Natural killer cell (primary cell): ENCODE measurements at regions of chr17 and their contacts with region 1.

Region 1: GRCh38 chr17:55356434-55357328 is 65.0 kb downstream of the MMD start:
- DNase-seq: peak; percentile 30 to 78
- ATAC-seq: peak; percentile 81 to 90 (median 81)
- H3K4me3 ChIP-seq: no peak overlapping the region
- H3K4me3 Mint-ChIP-seq: no peak overlapping the region
- H3K27ac ChIP-seq: no peak overlapping the region
- H3K27ac Mint-ChIP-seq: no peak overlapping the region
- H3K4me1 ChIP-seq: no peaks in the 10 kb centered on the region
- H3K4me1 Mint-ChIP-seq: peaks cover 5 to 6% of the 10 kb centered on the region in 2 donors
- H3K27me3 ChIP-seq: peaks cover 5% of the 10 kb centered on the region
- H3K27me3 Mint-ChIP-seq: peaks cover 14 to 22% of the 10 kb centered on the region in 2 donors
- CTCF ChIP-seq: peak; percentile 84

Region 2: DNA sequence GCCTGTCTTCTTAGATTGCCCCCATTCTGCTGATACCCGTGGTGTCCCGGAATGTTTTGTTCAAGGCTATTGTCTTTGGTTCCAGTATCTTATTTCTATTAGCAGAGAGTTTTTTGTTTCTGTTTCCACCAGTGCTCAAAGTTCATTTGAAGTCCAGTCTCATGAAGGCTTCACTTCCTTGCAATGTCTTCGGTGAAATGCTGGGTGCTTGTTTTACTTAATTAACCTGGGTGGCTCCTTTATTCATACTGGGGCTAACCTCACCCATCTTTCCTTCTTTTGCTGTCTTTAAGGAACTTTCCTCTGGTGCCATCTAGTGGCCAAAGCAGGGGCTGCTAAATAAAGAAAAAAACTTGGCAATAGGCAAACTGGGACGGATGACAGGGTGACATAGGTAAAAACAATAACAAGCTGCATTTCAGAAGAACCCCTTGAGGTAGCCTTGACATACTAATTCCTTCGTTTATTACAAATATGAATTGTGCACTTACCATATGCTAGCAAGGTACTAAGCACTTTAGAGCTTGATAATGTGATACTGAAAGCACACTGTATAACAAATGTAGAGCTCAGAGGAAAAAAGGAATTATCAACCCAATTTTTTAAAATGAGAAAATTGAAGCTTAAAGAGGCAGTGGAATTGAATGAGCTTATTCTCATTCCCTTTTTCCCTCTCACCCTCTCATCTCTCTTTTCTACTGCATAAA is 157.4 kb after region 1 on chr17:
- intact Hi-C with region 1: loop called (anchors 2 kb)
- DNase-seq: peak; percentile 39 to 82
- ATAC-seq: peak; percentile 59 to 76 (median 73)
- H3K4me3 ChIP-seq: no peak overlapping the region
- H3K4me3 Mint-ChIP-seq: no peak overlapping the region
- H3K27ac ChIP-seq: no peak overlapping the region
- H3K27ac Mint-ChIP-seq: no peak overlapping the region
- H3K4me1 ChIP-seq: no peaks in the 10 kb centered on the region
- H3K4me1 Mint-ChIP-seq: no peaks in the 10 kb centered on the region
- H3K27me3 ChIP-seq: no peaks in the 10 kb centered on the region
- H3K27me3 Mint-ChIP-seq: peaks cover 0 to 6% of the 10 kb centered on the region in 2 donors
- CTCF ChIP-seq: peak; percentile 76

Region 3: GRCh38 chr17:56943505-56944125 is 1586.9 kb after region 1 on chr17:
- intact Hi-C with region 1: no loop called
- DNase-seq: no peak
- ATAC-seq: no peak
- H3K4me3 ChIP-seq: no peak overlapping the region
- H3K4me3 Mint-ChIP-seq: no peak overlapping the region
- H3K27ac ChIP-seq: no peak overlapping the region
- H3K27ac Mint-ChIP-seq: no peak overlapping the region
- H3K4me1 ChIP-seq: no peaks in the 10 kb centered on the region
- H3K4me1 Mint-ChIP-seq: no peaks in the 10 kb centered on the region
- H3K27me3 ChIP-seq: no peaks in the 10 kb centered on the region
- H3K27me3 Mint-ChIP-seq: no peaks in the 10 kb centered on the region
- CTCF ChIP-seq: no peak